Psoas muscle (tissue), 8 donors: ENCODE measurements at regions of chr15 and their contacts with region 1.

Region 1: GRCh38 chr15:76059320-76060117 is at the start of gene TMEM266:
- DNase-seq: peak; percentile 40 to 75
- ATAC-seq: peak; percentile 74 to 81 (median 78)
- H3K4me3 ChIP-seq: peak within 1 kb of the TSS; percentile 77
- H3K27ac ChIP-seq: peak within 1 kb of the TSS; percentile 65
- H3K4me1 ChIP-seq: peaks cover 20% of the 10 kb centered on the region
- H3K27me3 ChIP-seq: peaks cover 0 to 13% (median 0%) of the 10 kb centered on the region in 3 donors
- CTCF ChIP-seq: no peak
- total RNA-seq, gene TMEM266: 2.6 to 7.9 (median 4.4) TPM

Region 2: DNA sequence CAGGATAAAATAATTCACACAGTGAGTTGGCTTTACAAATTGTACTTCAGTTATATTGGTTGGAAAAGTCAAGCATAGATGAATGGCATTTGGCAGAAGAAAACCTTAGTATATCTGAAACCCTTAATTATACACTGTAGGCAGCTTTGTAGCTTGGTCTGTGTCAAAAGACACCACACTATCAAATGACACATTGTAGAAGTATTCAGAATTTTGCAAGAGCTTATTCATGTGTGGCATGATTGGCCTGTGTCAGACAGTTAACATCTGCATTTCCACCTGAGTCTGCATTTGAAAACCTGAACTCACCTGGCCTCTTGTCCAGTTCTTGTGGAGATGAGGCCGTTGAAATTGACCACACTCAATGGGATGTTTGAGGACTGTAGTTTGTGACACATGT is 14.1 kb after region 1 on chr15:
- intact Hi-C with region 1: no loop called
- DNase-seq: no peak
- ATAC-seq: peak; percentile 54 to 88 (median 81)
- H3K4me3 ChIP-seq: no peak overlapping the region
- H3K27ac ChIP-seq: peak overlapping the region; percentile 5
- H3K4me1 ChIP-seq: peaks cover 12% of the 10 kb centered on the region
- H3K27me3 ChIP-seq: no peaks in the 10 kb centered on the region
- CTCF ChIP-seq: no peak

Region 3: DNA sequence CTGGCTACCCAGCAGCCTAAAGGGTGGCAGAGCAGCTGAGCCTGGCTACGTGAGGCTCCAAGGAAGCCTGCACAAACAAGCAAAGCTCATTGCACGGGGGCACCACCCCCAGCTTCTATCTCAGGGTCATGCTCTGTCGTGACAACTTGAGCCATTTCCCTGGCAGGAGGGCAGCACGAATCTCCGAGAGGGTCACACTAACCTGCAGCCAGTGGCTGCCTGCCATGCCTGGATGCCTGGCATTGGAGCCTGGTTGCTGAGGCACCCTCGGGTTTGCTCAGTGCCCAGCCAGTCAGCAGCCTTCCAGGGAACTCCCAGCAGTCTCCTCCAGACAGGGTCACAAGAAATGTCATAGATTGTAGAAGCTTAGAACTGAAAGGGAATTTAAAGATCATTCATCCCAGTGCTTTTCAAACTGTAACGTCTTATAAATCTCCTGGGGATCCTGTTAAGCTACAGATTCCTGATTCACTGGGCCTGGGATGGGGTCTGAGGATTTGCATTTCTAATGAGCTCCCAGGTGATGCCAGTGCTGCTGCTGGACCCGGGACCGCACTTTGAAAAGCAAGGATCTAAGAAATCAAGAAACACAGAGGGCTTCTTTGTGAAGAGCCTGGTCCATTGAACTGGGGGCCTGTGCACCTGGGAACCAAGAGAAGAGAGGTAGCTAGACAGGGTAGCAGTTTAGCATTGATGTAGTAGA is 48.7 kb after region 1 on chr15:
- intact Hi-C with region 1: loop called in 1 of 2 experiments (anchors 5 kb)
- DNase-seq: peak in 1 of 2 donors; percentile 79
- ATAC-seq: peak; percentile 55 to 94 (median 85)
- H3K4me3 ChIP-seq: peak overlapping the region; percentile 40
- H3K27ac ChIP-seq: peak overlapping the region; percentile 18
- H3K4me1 ChIP-seq: peaks cover 5% of the 10 kb centered on the region
- H3K27me3 ChIP-seq: no peaks in the 10 kb centered on the region
- CTCF ChIP-seq: no peak

Region 4: GRCh38 chr15:76678766-76679165 is 619.2 kb after region 1 on chr15:
- intact Hi-C with region 1: no loop called
- DNase-seq: no peak
- ATAC-seq: no peak
- H3K4me3 ChIP-seq: no peak overlapping the region
- H3K27ac ChIP-seq: no peak overlapping the region
- H3K4me1 ChIP-seq: no peaks in the 10 kb centered on the region
- H3K27me3 ChIP-seq: no peaks in the 10 kb centered on the region
- CTCF ChIP-seq: no peak